ENCODE measurements at regions of chr17 and their contacts with region 1.

Region 1: GRCh38 chr17:7035591-7036368 is at the start of gene SLC16A13:
- DNase-seq: peak; percentile 93 to 99 (median 96)
- ATAC-seq: peak; percentile 88 to 91
- H3K4me3 Mint-ChIP-seq: peak within 1 kb of the TSS; percentile 91 to 97 (median 94)
- H3K27ac Mint-ChIP-seq: peak within 1 kb of the TSS; percentile 97 to 99 (median 98)
- H3K4me1 Mint-ChIP-seq: peaks cover 30 to 71% (median 67%) of the 10 kb centered on the region in 4 donors
- H3K27me3 Mint-ChIP-seq: no peaks in the 10 kb centered on the region
- polyA plus RNA-seq, gene SLC16A13: 0.93 to 1.2 (median 0.97) TPM

Region 2: DNA sequence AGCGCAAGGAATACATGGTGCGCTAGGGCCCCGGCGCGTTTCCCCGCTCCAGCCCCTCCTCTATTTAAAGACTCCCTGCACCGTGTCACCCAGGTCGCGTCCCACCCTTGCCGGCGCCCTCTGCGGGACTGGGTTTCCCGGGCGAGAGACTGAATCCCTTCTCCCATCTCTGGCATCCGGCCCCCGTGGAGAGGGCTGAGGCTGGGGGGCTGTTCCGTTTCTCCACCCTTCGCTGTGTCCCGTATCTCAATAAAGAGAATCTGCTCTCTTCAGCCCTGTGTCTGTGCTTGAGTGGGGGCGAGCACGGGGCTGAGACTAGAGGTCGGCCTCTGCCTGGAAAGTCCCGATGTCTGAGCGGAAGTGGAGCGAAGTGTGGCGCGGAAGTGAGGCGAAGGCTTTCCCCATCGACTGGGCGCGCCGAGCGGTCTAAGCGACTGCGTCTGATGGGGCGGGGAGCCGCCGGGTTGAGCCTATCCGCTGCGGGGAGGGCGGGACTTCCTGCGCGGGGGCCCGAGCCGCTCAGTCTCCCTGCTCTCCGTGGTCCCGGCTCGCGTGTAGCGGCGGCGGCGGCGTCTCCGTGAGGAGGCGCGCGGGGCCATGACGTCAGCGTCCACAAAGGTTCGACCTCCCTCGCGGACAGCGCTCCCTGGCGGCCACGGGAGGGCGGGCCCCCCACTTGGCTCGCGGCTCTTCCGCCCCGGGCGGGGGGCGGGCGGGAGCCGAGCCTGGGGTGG is 21.4 kb before region 1 on chr17:
- POLR2A ChIA-PET with region 1: interaction called, 81 read pairs
- DNase-seq: peak; percentile 93 to 98 (median 96)
- ATAC-seq: peak; percentile 80 to 82
- H3K4me3 Mint-ChIP-seq: peak overlapping the region; percentile 88 to 99 (median 96)
- H3K27ac Mint-ChIP-seq: peak overlapping the region; percentile 98 to 100 (median 100)
- H3K4me1 Mint-ChIP-seq: peaks cover 32 to 89% (median 76%) of the 10 kb centered on the region in 4 donors
- H3K27me3 Mint-ChIP-seq: no peaks in the 10 kb centered on the region

Region 3: GRCh38 chr17:7021993-7022778 is 13.6 kb before region 1 on chr17:
- POLR2A ChIA-PET with region 1: interaction called, 81 read pairs
- DNase-seq: peak; percentile 57 to 80 (median 74)
- ATAC-seq: peak; percentile 58 to 77
- H3K4me3 Mint-ChIP-seq: peak overlapping the region; percentile 36 to 84 (median 75)
- H3K27ac Mint-ChIP-seq: peak overlapping the region in 9 of 10 donors; percentile 37 to 93 (median 81)
- H3K4me1 Mint-ChIP-seq: peaks cover 32 to 69% (median 50%) of the 10 kb centered on the region in 4 donors
- H3K27me3 Mint-ChIP-seq: peaks cover 0 to 10% (median 0%) of the 10 kb centered on the region in 5 donors

Region 4: GRCh38 chr17:7064261-7064660 is 28.5 kb after region 1 on chr17:
- POLR2A ChIA-PET with region 1: no interaction called
- DNase-seq: no peak
- ATAC-seq: no peak
- H3K4me3 Mint-ChIP-seq: no peak overlapping the region
- H3K27ac Mint-ChIP-seq: no peak overlapping the region
- H3K4me1 Mint-ChIP-seq: peaks cover 0 to 1% (median 0%) of the 10 kb centered on the region in 4 donors
- H3K27me3 Mint-ChIP-seq: peaks cover 3 to 20% (median 14%) of the 10 kb centered on the region in 5 donors

Region 5: GRCh38 chr17:7136266-7136877 is 100.6 kb after region 1 on chr17:
- POLR2A ChIA-PET with region 1: interaction called, 10 read pairs
- DNase-seq: peak; percentile 63 to 90 (median 73)
- ATAC-seq: no peak
- H3K4me3 Mint-ChIP-seq: peak overlapping the region in 3 of 10 donors; percentile 4 to 12 (median 4)
- H3K27ac Mint-ChIP-seq: peak overlapping the region in 1 of 10 donors; percentile 13
- H3K4me1 Mint-ChIP-seq: peaks cover 13 to 30% (median 19%) of the 10 kb centered on the region in 4 donors
- H3K27me3 Mint-ChIP-seq: peaks cover 0 to 17% (median 7%) of the 10 kb centered on the region in 5 donors

Measured in naive thymus-derived CD8-positive, alpha-beta T cell (primary cell).